Transverse colon (tissue), 4 donors: ENCODE measurements at regions of chr15 and their contacts with region 1.

Region 1: DNA sequence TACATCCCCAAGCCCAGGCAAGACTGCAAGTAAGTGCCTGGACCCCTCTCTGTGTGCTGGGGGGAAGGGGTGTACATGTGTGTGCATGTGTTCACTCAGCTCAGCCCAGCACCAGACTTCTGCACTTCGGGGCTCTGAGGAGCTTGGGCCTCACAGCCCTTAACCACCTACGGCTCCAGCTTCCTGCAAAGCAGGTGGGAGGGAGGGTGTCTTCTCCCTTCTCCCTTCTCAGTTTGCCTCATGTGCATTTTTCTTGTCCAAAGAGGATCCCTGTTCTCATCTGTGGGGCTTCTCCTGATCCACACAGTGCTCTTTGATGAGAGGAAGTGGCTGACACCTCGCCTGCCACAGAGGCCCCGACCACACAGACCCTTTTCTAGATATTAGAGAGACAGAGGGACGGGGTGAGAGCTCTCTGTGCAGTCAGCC is 69.3 kb downstream of the MESD start:
- DNase-seq: no peak
- H3K4me3 ChIP-seq: no peak overlapping the region
- H3K27ac ChIP-seq: no peak overlapping the region
- H3K4me1 ChIP-seq: peaks cover 0 to 10% (median 0%) of the 10 kb centered on the region in 4 donors
- H3K27me3 ChIP-seq: no peaks in the 10 kb centered on the region
- CTCF ChIP-seq: no peak
- EP300 ChIP-seq: no peak
- POLR2A ChIP-seq: no peak

Region 2: GRCh38 chr15:81323944-81324881 is 403.9 kb after region 1 on chr15 and contains the start of gene STARD5:
- in situ Hi-C with region 1: no loop called
- intact Hi-C with region 1: loop called (anchors 5 kb)
- DNase-seq: peak; percentile 100
- H3K4me3 ChIP-seq: peak within 1 kb of the TSS; percentile 70 to 94 (median 86)
- H3K27ac ChIP-seq: peak within 1 kb of the TSS; percentile 83 to 95 (median 91)
- H3K4me1 ChIP-seq: peaks cover 4 to 20% (median 11%) of the 10 kb centered on the region in 4 donors
- H3K27me3 ChIP-seq: no peaks in the 10 kb centered on the region
- CTCF ChIP-seq: no peak
- EP300 ChIP-seq: no peak
- POLR2A ChIP-seq: peak; percentile 97
- total RNA-seq, gene STARD5: 11.2 to 54.5 (median 41.3) TPM